Vagina (tissue), 2 donors: ENCODE measurements at regions of chr6 and their contacts with region 1.

Region 1: DNA sequence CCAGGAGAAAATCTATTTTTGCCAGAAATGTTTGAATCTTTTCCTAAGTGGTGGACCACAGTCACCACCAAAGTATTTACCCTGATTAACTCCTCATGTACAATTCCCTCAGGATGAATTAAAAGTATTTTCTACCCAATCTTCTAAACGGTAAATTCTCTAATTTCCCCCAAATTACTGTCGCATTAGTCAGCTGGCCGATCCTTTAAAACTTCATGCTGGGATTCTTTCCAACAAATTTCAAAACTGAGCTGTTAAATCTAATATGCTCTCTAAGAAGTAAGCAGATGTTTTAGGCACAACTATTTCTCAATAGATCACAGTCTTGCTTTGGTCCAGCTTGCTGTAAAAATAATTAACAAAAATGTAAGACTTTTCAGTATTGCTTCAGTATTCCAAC is 447.2 kb downstream of the FRK start:
- DNase-seq: no peak
- H3K4me3 ChIP-seq: no peak overlapping the region
- H3K27ac ChIP-seq: no peak overlapping the region
- H3K4me1 ChIP-seq: no peaks in the 10 kb centered on the region
- H3K27me3 ChIP-seq: no peaks in the 10 kb centered on the region
- CTCF ChIP-seq: no peak
- POLR2A ChIP-seq: no peak

Region 2: DNA sequence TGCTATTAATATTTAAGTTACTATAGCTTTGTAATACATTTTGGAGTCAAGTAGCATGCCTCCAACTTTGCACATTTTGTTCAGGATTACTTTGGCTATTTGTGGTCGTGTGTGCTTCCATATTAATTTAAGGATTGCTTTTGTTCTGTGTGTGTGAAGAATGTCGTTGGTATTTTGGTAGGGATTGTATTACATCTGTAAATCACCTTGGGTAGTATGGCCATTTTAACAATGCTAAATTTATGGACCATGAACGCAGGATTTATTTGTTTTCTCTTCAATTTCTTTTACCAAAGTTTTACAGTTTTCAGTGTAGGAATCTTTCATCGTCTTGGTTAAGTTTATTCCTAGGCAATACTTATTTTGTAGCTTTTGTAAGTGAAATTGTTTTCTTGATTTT is 310.8 kb before region 1 on chr6:
- intact Hi-C with region 1: no loop called
- DNase-seq: no peak
- H3K4me3 ChIP-seq: no peak overlapping the region
- H3K27ac ChIP-seq: no peak overlapping the region
- H3K4me1 ChIP-seq: no peaks in the 10 kb centered on the region
- H3K27me3 ChIP-seq: no peaks in the 10 kb centered on the region
- CTCF ChIP-seq: no peak
- POLR2A ChIP-seq: no peak

Region 3: GRCh38 chr6:115441651-115442050 is 171.8 kb before region 1 on chr6:
- intact Hi-C with region 1: loop called (anchors 10 kb)
- DNase-seq: no peak
- H3K4me3 ChIP-seq: no peak overlapping the region
- H3K27ac ChIP-seq: no peak overlapping the region
- H3K4me1 ChIP-seq: no peaks in the 10 kb centered on the region
- H3K27me3 ChIP-seq: no peaks in the 10 kb centered on the region
- CTCF ChIP-seq: no peak
- POLR2A ChIP-seq: no peak

Region 4: GRCh38 chr6:117545161-117545595 is 1931.7 kb after region 1 on chr6:
- intact Hi-C with region 1: no loop called
- DNase-seq: no peak
- H3K4me3 ChIP-seq: no peak overlapping the region
- H3K27ac ChIP-seq: no peak overlapping the region
- H3K4me1 ChIP-seq: peaks cover 12% of the 10 kb centered on the region
- H3K27me3 ChIP-seq: no peaks in the 10 kb centered on the region
- CTCF ChIP-seq: no peak
- POLR2A ChIP-seq: no peak